ENCODE measurements at regions of chr11 and their contacts with region 1.

Region 1: DNA sequence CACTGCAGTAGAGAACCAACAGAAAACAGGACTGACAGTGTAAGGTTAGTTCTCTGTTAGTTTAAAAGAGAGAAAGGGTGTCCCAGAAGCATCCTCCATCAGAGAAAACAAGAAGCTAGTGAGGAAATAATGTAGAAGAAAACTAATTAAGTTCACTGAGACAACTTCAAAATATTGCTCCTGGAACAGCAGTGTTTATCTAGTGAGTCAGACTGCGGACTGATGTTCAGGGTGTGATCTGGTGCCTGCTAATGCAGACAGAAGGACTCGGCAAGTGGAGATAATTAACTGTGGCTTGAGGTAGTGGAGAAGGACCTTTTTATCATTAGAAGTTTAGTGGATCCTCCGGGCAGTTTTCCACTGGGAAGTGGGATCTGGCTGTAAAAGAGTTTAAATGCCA is 55.4 kb downstream of the CDON start:
- DNase-seq: no peak
- H3K4me3 ChIP-seq: no peak overlapping the region
- H3K27ac ChIP-seq: peak overlapping the region in 3 of 4 donors; percentile 59 to 70 (median 70)
- H3K4me1 ChIP-seq: peaks cover 0 to 21% (median 17%) of the 10 kb centered on the region in 4 donors
- H3K27me3 ChIP-seq: no peaks in the 10 kb centered on the region
- CTCF ChIP-seq: no peak
- EP300 ChIP-seq: no peak
- POLR2A ChIP-seq: no peak

Region 2: DNA sequence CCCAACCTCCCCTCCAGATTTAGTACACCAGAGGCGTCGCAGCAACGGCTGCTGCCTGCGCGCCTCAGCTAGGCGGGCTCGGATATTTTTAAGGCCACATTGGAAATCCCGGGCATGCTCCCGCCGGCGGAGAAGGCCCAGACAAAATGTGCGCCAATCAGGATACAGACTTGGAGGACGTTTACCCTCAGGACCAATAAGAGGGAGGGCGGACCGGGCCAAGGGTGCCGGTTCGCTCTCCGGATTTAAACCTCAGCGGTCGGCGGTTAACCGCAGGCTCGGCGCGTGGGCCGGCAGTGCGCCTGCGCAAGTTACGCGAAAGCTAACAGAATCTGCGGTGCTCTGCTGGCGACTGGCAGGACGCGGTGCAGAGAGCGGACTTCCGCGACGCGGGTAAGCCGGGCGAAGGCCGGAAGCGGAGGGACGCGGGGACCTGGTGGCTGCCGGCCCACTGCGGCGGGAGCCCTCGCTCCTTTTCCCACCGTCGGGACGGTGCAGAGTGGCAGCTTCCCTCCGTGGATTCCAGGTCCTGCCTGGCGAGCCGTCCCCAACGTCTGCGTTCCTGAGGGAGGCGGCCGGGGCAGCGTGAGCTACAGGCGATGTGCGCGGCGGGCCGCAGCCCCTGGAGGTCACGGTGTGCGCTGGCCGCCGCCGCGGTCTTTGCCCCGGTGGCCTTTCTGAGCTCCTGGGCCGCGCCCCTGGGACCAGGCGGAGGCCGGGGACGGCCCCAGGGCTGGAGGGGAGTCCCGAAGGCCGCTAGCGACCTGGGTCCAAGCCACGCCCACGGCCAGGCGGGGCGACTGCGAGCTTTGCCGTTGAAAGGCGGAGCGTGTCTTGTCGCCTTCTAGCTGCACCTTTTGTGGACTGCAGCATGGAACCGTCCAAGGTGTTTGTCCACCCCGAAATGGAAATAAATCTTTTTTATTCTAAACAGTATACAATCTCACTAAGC is 119.6 kb before region 1 on chr11 and contains the start of gene HYLS1:
- intact Hi-C with region 1: no loop called
- DNase-seq: peak; percentile 98
- H3K4me3 ChIP-seq: peak within 1 kb of the TSS; percentile 59 to 88 (median 70)
- H3K27ac ChIP-seq: peak within 1 kb of the TSS; percentile 93 to 99 (median 96)
- H3K4me1 ChIP-seq: peaks cover 0 to 13% (median 5%) of the 10 kb centered on the region in 4 donors
- H3K27me3 ChIP-seq: no peaks in the 10 kb centered on the region
- CTCF ChIP-seq: peak in 1 of 4 experiments; percentile 19
- EP300 ChIP-seq: peak in 1 of 4 donors; percentile 24
- POLR2A ChIP-seq: peak; percentile 30 to 48
- total RNA-seq, gene HYLS1: 6.1 to 8.7 (median 6.9) TPM

Region 3: GRCh38 chr11:125968354-125968753 is 38.9 kb before region 1 on chr11:
- intact Hi-C with region 1: loop called (anchors 5 kb)
- DNase-seq: no peak
- H3K4me3 ChIP-seq: no peak overlapping the region
- H3K27ac ChIP-seq: no peak overlapping the region
- H3K4me1 ChIP-seq: no peaks in the 10 kb centered on the region
- H3K27me3 ChIP-seq: no peaks in the 10 kb centered on the region
- CTCF ChIP-seq: no peak
- EP300 ChIP-seq: no peak
- POLR2A ChIP-seq: no peak

Measured in sigmoid colon (tissue), 7 donors.